Activated CD4-positive, alpha-beta T cell treated with anti-CD3 and anti-CD28 coated beads for 36 hours (primary cell): ENCODE measurements at regions of chrX and their contacts with region 1.

Region 1: DNA sequence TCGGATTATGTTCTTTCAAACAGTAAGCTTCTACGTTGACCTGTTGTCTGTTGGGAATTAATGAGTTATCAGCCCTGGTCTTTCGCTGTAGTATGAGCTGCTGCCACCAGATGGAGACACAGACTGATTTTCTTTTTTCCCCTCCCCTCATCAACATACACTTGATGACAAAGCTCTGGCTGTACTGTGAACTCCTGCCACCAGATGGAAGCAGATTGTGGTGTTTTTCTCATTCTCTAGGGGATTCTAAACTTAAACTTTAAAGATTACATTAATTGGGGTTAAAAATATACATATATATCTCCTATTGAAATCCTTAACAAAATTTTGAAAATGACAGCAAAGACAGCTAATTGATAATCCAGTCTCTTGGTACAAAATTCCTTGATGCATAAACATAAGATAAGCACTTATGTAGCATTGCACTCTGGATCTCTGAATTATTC is 44.8 kb downstream of the SMS start:
- DNase-seq: peak; percentile 72
- ATAC-seq: peak; percentile 79
- H3K4me3 Mint-ChIP-seq: no peak overlapping the region
- H3K27ac Mint-ChIP-seq: no peak overlapping the region
- H3K4me1 Mint-ChIP-seq: peaks cover 21% of the 10 kb centered on the region
- H3K27me3 Mint-ChIP-seq: no peaks in the 10 kb centered on the region

Region 2: DNA sequence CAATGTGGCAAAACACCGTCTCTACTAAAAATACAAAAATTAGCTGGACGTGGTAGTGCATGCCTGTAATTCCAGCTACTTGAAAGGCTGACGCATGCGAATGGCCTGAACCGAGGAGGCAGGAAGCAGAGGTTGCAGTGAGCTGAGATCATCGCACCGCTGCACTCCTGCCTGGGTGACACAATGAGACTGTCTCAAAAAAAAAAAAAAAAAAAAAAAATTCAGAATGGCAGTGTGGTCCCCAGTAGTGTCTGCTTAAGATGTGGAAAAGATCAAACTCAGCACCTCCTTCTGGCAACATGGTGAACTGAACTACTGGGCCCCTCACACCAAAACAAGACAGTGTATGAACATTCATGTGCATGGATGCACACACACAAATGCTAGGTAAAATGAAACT is 12.6 kb before region 1 on chrX:
- CTCF ChIA-PET with region 1: interaction called, 14 read pairs
- POLR2A ChIA-PET with region 1: no interaction called
- intact Hi-C with region 1: no loop called
- DNase-seq: peak; percentile 68
- ATAC-seq: peak; percentile 81
- H3K4me3 Mint-ChIP-seq: no peak overlapping the region
- H3K27ac Mint-ChIP-seq: peak overlapping the region; percentile 88
- H3K4me1 Mint-ChIP-seq: peaks cover 38% of the 10 kb centered on the region
- H3K27me3 Mint-ChIP-seq: no peaks in the 10 kb centered on the region

Region 3: GRCh38 chrX:22081475-22082092 is 96.2 kb after region 1 on chrX:
- CTCF ChIA-PET with region 1: interaction called, 5 read pairs
- POLR2A ChIA-PET with region 1: no interaction called
- intact Hi-C with region 1: loop called in 1 of 2 experiments (anchors 5 kb)
- DNase-seq: peak; percentile 76
- ATAC-seq: no peak
- H3K4me3 Mint-ChIP-seq: no peak overlapping the region
- H3K27ac Mint-ChIP-seq: no peak overlapping the region
- H3K4me1 Mint-ChIP-seq: peaks cover 9% of the 10 kb centered on the region
- H3K27me3 Mint-ChIP-seq: no peaks in the 10 kb centered on the region

Region 4: DNA sequence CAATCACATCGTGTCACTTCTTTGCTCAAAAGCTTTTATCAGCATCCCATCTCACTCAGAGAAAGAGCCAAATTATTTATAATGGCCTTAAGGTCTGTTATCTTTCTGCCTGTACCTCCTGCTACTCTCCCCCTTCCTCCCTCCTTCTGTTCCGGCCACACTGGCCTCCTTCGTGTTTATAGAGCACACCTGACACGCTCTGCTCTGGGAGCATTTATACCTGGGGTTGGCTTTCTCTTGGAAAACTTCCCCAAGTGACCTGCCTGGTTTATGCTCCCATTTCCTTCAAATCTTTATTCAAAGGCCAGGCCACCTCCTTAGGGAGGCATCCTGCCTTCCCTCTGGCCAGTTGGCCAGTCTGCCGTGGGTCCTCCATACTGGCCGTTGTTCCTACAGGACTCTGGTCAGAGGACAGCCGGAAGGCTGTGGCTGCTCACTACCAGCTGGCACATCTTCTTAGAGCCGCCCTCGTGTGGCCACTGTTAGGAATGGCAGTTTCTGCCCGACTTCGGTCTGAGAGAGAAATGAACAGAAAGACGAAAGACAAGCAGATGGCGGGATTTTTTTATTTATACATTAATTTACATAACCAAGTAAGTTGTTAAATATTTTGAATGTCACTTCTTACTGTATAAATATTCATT is 207.2 kb after region 1 on chrX:
- CTCF ChIA-PET with region 1: interaction called, 11 read pairs
- POLR2A ChIA-PET with region 1: no interaction called
- intact Hi-C with region 1: loop called (anchors 1 kb)
- DNase-seq: peak; percentile 73
- ATAC-seq: peak; percentile 36
- H3K4me3 Mint-ChIP-seq: no peak overlapping the region
- H3K27ac Mint-ChIP-seq: no peak overlapping the region
- H3K4me1 Mint-ChIP-seq: peaks cover 8% of the 10 kb centered on the region
- H3K27me3 Mint-ChIP-seq: no peaks in the 10 kb centered on the region

Region 5: DNA sequence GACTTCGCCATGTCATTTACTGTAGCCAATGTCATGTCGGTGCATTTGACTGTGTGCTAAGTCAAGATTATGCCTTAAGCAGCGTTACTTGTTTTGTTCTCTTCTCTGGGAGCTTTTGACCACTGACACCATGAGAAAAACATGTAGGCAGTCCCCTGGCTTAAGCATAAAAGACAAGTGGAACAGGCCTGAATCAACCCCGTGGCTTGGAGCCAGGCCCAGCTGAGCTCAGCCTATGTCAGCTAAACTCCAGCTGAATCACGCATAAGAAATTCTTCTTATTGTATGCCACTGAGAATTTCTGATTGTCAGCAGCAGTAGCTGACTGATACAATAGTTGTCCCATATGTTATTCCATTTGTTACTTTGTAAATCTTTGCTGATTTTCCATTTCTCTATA is 549.3 kb after region 1 on chrX:
- CTCF ChIA-PET with region 1: no interaction called
- POLR2A ChIA-PET with region 1: no interaction called
- intact Hi-C with region 1: no loop called
- DNase-seq: no peak
- ATAC-seq: no peak
- H3K4me3 Mint-ChIP-seq: no peak overlapping the region
- H3K27ac Mint-ChIP-seq: no peak overlapping the region
- H3K4me1 Mint-ChIP-seq: no peaks in the 10 kb centered on the region
- H3K27me3 Mint-ChIP-seq: peaks cover 2% of the 10 kb centered on the region